Activated B cell treated with CpG ODN at 0.5 μM for 24 hours (primary cell): ENCODE measurements at regions of chr1 and their contacts with region 1.

Region 1: GRCh38 chr1:152459596-152460528 is 45.8 kb upstream of the CRNN start:
- DNase-seq: peak; percentile 64
- ATAC-seq: peak; percentile 77
- H3K4me3 Mint-ChIP-seq: peak overlapping the region; percentile 69
- H3K27ac Mint-ChIP-seq: peak overlapping the region; percentile 91
- H3K4me1 Mint-ChIP-seq: peaks cover 28% of the 10 kb centered on the region
- H3K27me3 Mint-ChIP-seq: no peaks in the 10 kb centered on the region
- CTCF ChIP-seq: peak; percentile 84

Region 2: GRCh38 chr1:152047730-152048402 is 412.0 kb before region 1 on chr1:
- CTCF ChIA-PET with region 1: interaction called, 34 read pairs
- POLR2A ChIA-PET with region 1: interaction called, 6 read pairs
- intact Hi-C with region 1: loop called (anchors 1 kb)
- DNase-seq: peak; percentile 72
- ATAC-seq: peak; percentile 94
- H3K4me3 Mint-ChIP-seq: peak overlapping the region; percentile 73
- H3K27ac Mint-ChIP-seq: peak overlapping the region; percentile 98
- H3K4me1 Mint-ChIP-seq: peaks cover 17% of the 10 kb centered on the region
- H3K27me3 Mint-ChIP-seq: peaks cover 2% of the 10 kb centered on the region
- CTCF ChIP-seq: no peak

Region 3: GRCh38 chr1:152347116-152347728 is 112.6 kb before region 1 on chr1:
- CTCF ChIA-PET with region 1: interaction called, 29 read pairs
- POLR2A ChIA-PET with region 1: no interaction called
- intact Hi-C with region 1: loop called (anchors 1 kb)
- DNase-seq: no peak
- ATAC-seq: peak; percentile 47
- H3K4me3 Mint-ChIP-seq: no peak overlapping the region
- H3K27ac Mint-ChIP-seq: no peak overlapping the region
- H3K4me1 Mint-ChIP-seq: no peaks in the 10 kb centered on the region
- H3K27me3 Mint-ChIP-seq: no peaks in the 10 kb centered on the region
- CTCF ChIP-seq: peak; percentile 93

Region 4: DNA sequence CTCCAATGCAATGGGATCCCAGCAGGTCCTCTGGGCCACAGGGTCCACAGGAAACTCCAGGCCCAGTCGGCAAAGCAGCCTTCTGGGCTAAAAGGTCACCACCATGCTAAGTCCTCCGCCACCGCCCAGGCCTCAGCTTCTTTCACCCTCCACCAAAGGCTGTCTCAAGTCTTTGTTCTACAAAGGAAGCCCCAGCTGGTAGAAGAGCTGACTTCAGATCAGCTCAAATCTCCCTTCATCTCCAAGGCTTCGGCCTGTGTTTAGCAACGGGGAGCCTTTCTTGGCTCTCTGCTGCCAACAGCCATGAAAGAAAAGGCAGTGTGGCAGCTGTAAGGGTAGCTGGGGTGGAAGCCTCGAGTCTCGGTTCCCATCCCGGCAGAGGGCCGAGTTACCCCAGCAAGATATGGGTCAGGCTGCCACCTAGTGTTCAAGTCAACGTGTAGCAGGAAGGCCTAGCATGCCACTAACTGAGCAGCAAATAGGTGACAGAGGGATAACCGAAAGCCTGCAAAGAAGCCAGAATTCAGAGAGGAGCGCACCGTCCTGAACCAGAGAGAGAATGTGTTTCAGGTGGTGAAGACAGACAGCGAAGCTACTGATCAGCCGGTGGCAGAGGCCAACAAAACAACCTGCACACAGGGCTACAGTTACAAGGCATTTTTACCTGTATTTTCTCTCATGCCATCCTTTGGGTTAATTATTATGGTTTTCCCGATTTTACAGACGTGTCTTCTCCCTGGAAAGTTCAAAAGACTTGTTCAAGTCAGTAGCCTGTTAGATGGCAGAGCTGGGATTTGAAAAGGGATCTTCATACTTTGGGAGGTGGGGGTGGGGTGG is 19.0 kb before region 1 on chr1:
- CTCF ChIA-PET with region 1: interaction called, 29 read pairs
- POLR2A ChIA-PET with region 1: no interaction called
- intact Hi-C with region 1: loop called (anchors 2 kb)
- DNase-seq: peak; percentile 37
- ATAC-seq: peak; percentile 99
- H3K4me3 Mint-ChIP-seq: no peak overlapping the region
- H3K27ac Mint-ChIP-seq: no peak overlapping the region
- H3K4me1 Mint-ChIP-seq: no peaks in the 10 kb centered on the region
- H3K27me3 Mint-ChIP-seq: peaks cover 26% of the 10 kb centered on the region
- CTCF ChIP-seq: no peak